SK-N-SH (cell line): ENCODE measurements at regions of chr9 and their contacts with region 1.

Region 1: GRCh38 chr9:131334629-131335367 is 45.3 kb downstream of the PLPP7 start:
- DNase-seq: no peak
- H3K4me3 ChIP-seq: no peak overlapping the region
- H3K27ac ChIP-seq: no peak overlapping the region
- H3K4me1 ChIP-seq: peaks cover 0 to 6% of the 10 kb centered on the region in 2 experiments; a peak in 1 of 4 replicates
- H3K27me3 ChIP-seq: no peaks in the 10 kb centered on the region
- CTCF ChIP-seq: no peak
- EP300 ChIP-seq: no peak
- RAD21 ChIP-seq: no peak

Region 2: DNA sequence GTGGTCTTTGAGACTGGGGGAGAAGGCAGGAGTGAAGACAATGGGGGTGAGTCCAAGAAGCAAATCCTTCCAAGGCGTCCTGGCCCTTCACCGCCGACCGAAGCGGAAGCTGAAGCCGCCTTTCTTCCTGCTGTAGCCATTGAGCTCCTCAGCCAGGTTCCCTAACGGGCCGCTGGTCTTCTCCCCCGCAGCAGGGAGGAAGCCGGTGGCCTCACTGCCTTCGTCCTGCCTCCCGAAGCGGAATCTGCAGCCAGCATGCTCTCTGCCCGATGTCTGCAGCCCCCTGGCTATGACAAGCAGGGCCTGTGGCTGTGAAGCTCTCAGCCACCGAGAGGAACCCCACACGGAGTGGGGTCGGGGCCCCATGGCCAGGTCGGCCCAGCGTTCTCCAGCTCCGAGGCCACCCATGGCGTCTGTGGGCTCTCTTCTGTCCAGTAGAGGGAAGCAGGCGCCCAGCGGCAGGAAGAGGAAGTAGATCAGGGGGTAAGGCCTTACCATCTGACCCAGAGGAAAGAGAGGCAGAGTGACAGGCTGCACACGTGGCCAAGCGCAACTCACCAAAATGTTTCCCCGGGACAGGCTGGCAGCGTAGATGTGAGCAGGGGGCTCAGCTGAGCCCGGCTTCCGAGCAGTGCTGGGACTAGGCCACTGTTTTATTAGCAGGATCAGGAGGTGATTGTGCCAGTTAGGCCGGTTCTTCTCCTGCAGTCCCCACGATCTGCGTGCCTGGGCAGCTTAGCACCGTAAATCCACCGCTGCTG is 441.3 kb before region 1 on chr9:
- CTCF ChIA-PET with region 1: no interaction called
- POLR2A ChIA-PET with region 1: no interaction called
- DNase-seq: peak; percentile 41
- H3K4me3 ChIP-seq: no peak overlapping the region
- H3K27ac ChIP-seq: no peak overlapping the region
- H3K4me1 ChIP-seq: peaks cover 0 to 3% of the 10 kb centered on the region in 2 experiments; a peak in 1 of 4 replicates
- H3K27me3 ChIP-seq: no peaks in the 10 kb centered on the region
- CTCF ChIP-seq: 0 out of 2 replicates have a peak, but pooled peaks have one; percentile 10
- EP300 ChIP-seq: no peak
- RAD21 ChIP-seq: no peak

Region 3: DNA sequence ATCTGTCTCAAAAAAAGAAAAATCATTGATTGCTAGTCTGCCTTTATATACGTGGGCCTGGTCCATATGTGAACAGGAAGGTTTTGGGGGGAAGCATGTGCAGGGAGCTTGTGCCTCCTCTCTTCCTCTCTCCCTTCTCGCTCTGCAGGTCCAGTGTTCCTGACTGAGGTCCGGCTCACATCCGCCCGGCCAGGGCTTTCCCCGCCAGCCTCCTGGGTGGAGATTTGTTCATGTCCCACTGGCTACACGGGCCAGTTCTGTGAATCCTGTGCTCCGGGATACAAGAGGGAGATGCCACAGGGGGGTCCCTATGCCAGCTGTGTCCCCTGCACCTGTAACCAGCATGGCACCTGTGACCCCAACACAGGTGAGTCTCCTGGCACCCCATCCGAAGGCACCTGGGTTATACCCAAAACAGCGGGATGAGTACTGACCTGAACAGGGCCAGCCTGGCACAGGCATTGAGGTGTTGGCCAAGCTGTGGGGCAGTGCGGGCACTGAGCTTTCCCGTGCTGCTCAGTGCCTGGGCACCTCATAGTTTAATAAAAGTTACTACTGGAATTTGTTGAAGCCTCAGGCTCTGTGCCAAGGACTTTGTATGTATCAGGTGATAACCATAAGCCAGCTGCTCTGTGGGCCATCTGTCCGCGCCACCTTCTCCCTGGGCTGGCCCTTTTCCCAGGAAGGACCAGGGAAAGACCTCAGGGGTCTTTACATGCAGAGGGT is 277.9 kb before region 1 on chr9:
- CTCF ChIA-PET with region 1: interaction called, 45 read pairs
- POLR2A ChIA-PET with region 1: no interaction called
- DNase-seq: no peak
- H3K4me3 ChIP-seq: no peak overlapping the region
- H3K27ac ChIP-seq: no peak overlapping the region
- H3K4me1 ChIP-seq: peaks cover 0 to 3% of the 10 kb centered on the region in 2 experiments; a peak in 1 of 4 replicates
- H3K27me3 ChIP-seq: no peaks in the 10 kb centered on the region; the same call in 1 of the 2 replicates
- CTCF ChIP-seq: no peak
- EP300 ChIP-seq: no peak
- RAD21 ChIP-seq: no peak

Region 4: GRCh38 chr9:131178382-131178781 is 156.4 kb before region 1 on chr9:
- CTCF ChIA-PET with region 1: interaction called, 192 read pairs
- POLR2A ChIA-PET with region 1: no interaction called
- DNase-seq: peak; percentile 83
- H3K4me3 ChIP-seq: no peak overlapping the region; a peak in 1 of 4 replicates
- H3K27ac ChIP-seq: peak overlapping the region in 1 of 2 experiments; percentile 96; a peak in 2 of 4 replicates
- H3K4me1 ChIP-seq: peaks cover 0 to 24% of the 10 kb centered on the region in 2 experiments; a peak in 2 of 4 replicates
- H3K27me3 ChIP-seq: no peaks in the 10 kb centered on the region
- CTCF ChIP-seq: peak; percentile 93
- EP300 ChIP-seq: no peak
- RAD21 ChIP-seq: peak; percentile 83

Region 5: DNA sequence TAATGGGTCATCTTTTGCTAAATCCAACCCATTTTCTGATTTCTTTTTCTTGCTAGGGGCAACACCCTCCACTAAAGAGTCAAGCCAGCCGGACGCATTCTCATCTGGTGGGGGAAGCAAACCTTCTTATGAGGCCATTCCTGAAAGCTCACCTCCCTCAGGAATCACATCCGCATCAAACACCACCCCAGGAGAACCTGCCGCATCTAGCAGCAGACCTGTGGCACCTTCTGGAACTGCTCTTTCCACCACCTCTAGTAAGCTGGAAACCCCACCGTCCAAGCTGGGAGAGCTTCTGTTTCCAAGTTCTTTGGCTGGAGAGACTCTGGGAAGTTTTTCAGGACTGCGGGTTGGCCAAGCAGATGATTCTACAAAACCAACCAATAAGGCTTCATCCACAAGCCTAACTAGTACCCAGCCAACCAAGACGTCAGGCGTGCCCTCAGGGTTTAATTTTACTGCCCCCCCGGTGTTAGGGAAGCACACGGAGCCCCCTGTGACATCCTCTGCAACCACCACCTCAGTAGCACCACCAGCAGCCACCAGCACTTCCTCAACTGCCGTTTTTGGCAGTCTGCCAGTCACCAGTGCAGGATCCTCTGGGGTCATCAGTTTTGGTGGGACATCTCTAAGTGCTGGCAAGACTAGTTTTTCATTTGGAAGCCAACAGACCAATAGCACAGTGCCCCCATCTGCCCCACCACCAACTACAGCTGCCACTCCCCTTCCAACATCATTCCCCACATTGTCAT is 137.5 kb before region 1 on chr9:
- CTCF ChIA-PET with region 1: interaction called, 28 read pairs
- POLR2A ChIA-PET with region 1: no interaction called
- DNase-seq: no peak
- H3K4me3 ChIP-seq: no peak overlapping the region
- H3K27ac ChIP-seq: no peak overlapping the region
- H3K4me1 ChIP-seq: no peaks in the 10 kb centered on the region
- H3K27me3 ChIP-seq: no peaks in the 10 kb centered on the region
- CTCF ChIP-seq: no peak
- EP300 ChIP-seq: no peak
- RAD21 ChIP-seq: no peak

Region 6: GRCh38 chr9:131233995-131234394 is 100.8 kb before region 1 on chr9:
- CTCF ChIA-PET with region 1: interaction called, 18 read pairs
- POLR2A ChIA-PET with region 1: no interaction called
- DNase-seq: no peak
- H3K4me3 ChIP-seq: no peak overlapping the region
- H3K27ac ChIP-seq: no peak overlapping the region
- H3K4me1 ChIP-seq: peaks cover 0 to 40% of the 10 kb centered on the region in 2 experiments; a peak in 1 of 4 replicates
- H3K27me3 ChIP-seq: no peaks in the 10 kb centered on the region
- CTCF ChIP-seq: no peak
- EP300 ChIP-seq: no peak
- RAD21 ChIP-seq: no peak

Region 7: DNA sequence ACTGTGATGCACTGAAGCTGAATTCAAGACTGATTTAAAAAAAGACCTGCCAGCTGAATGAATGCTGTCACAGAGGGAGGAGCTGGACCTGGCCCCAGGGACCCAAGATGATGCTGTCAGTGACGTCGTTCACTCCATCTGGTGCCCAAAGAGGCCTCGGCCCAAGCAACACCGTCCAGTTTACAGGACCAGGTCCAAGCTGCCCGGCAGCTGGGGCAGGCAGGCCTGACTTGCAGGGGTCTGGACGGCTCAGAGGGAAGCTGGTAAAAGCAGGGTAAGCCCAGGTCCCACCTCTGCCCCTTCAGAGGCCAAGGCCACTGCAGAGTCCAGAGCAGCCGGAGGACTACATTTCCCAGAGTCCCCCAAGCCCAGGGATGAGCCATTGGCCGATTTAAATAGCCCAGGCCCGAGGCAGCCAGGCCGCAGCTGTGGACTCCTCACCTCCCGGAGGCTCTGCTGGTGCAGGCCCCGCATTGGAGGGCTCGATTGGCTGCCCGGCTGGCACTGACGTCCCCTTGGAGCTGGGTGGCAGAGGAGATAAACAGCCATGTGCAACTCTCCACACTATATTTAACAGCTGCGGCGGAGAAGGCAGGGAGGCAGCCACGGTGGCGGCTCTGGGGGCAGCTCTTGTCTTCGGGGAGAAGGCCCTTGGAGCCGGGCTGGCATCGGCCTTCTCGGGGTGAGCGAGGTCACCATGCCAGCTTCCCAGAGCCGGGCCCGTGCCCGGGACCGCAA is 45.3 kb before region 1 on chr9 and contains the start of gene PLPP7:
- CTCF ChIA-PET with region 1: interaction called, 25 read pairs
- POLR2A ChIA-PET with region 1: no interaction called
- DNase-seq: peak; percentile 95
- H3K4me3 ChIP-seq: peak within 1 kb of the TSS; percentile 57 to 66
- H3K27ac ChIP-seq: peak within 1 kb of the TSS; percentile 50 to 83
- H3K4me1 ChIP-seq: peaks cover 7 to 29% of the 10 kb centered on the region in 2 experiments; a peak in 2 of 4 replicates
- H3K27me3 ChIP-seq: no peaks in the 10 kb centered on the region
- CTCF ChIP-seq: no peak
- EP300 ChIP-seq: 0 out of 4 replicates have a peak, but pooled peaks of 1 of the 2 experiments have one; percentile 5
- RAD21 ChIP-seq: no peak
- polyA plus RNA-seq, gene PLPP7: 8.6 and 8.8 TPM in 2 replicates

Region 8: GRCh38 chr9:131349881-131350563 is 15.2 kb after region 1 on chr9:
- CTCF ChIA-PET with region 1: interaction called, 32 read pairs
- POLR2A ChIA-PET with region 1: no interaction called
- DNase-seq: peak; percentile 90
- H3K4me3 ChIP-seq: peak overlapping the region; percentile 40 to 67
- H3K27ac ChIP-seq: no peak overlapping the region
- H3K4me1 ChIP-seq: peaks cover 0 to 5% of the 10 kb centered on the region in 2 experiments; a peak in 1 of 4 replicates
- H3K27me3 ChIP-seq: no peaks in the 10 kb centered on the region
- CTCF ChIP-seq: peak; percentile 81
- EP300 ChIP-seq: no peak
- RAD21 ChIP-seq: peak; percentile 85